HEK293 (cell line): ENCODE measurements at regions of chr6 and their contacts with region 1.

Region 1: GRCh38 chr6:46419576-46420002 is 71.7 kb downstream of the RCAN2 start:
- H3K4me3 ChIP-seq: no peak overlapping the region
- H3K27ac ChIP-seq: no peak overlapping the region
- H3K4me1 ChIP-seq: peaks cover 3% of the 10 kb centered on the region; the same call in 1 of the 2 replicates
- CTCF ChIP-seq: no peak

Region 2: DNA sequence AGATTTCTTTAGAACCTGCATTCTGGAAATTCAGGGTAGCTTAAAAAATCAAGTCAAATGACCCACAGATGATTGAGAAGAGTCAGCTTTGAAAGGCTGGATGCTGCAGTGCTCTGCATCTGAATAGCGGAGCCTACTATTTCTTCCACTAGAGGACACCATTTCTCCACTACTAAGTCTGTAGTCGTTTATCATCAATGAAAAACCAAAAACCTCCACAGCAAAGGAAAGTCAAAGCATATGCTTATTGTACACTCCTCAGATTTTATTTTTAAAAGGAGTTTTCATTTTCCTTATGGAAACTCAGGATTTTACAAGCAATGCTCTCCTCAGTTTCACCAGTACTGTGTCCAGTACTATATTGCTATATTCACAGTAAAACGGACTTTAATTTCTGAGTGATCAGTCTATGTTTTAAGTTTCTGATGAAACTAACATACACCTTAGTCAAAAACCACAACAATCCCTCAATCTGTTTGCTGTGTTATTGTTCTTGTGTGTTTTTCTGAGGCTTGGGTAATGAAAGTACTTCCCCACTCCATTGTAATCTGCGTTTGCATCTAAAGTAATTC is 198.3 kb before region 1 on chr6:
- CTCF ChIA-PET with region 1: interaction called, 13 read pairs
- POLR2A ChIA-PET with region 1: no interaction called
- H3K4me3 ChIP-seq: no peak overlapping the region
- H3K27ac ChIP-seq: no peak overlapping the region
- H3K4me1 ChIP-seq: no peaks in the 10 kb centered on the region
- CTCF ChIP-seq: peak; percentile 65; the same call in 1 of the 2 replicates

Region 3: DNA sequence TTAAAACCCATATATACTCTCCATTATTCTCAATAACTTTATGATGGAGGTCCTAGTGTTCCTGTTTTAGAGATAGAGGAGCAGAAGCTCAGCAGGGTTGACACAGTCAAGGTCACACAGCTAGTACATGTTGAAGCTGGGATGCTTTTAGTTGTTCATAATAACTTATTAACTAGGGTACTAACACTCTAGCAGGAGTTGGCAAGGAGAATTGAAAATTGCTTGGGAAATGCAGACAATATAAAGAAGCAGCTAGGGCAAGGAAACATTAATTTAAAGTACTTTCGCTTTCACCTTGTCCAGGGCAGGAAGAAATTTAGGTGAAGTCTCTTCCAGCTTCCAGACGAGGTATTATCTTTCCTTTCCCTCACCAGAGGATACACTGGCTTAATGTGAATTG is 62.0 kb before region 1 on chr6:
- CTCF ChIA-PET with region 1: no interaction called
- POLR2A ChIA-PET with region 1: no interaction called
- H3K4me3 ChIP-seq: no peak overlapping the region
- H3K27ac ChIP-seq: no peak overlapping the region
- H3K4me1 ChIP-seq: no peaks in the 10 kb centered on the region
- CTCF ChIP-seq: no peak

Region 4: DNA sequence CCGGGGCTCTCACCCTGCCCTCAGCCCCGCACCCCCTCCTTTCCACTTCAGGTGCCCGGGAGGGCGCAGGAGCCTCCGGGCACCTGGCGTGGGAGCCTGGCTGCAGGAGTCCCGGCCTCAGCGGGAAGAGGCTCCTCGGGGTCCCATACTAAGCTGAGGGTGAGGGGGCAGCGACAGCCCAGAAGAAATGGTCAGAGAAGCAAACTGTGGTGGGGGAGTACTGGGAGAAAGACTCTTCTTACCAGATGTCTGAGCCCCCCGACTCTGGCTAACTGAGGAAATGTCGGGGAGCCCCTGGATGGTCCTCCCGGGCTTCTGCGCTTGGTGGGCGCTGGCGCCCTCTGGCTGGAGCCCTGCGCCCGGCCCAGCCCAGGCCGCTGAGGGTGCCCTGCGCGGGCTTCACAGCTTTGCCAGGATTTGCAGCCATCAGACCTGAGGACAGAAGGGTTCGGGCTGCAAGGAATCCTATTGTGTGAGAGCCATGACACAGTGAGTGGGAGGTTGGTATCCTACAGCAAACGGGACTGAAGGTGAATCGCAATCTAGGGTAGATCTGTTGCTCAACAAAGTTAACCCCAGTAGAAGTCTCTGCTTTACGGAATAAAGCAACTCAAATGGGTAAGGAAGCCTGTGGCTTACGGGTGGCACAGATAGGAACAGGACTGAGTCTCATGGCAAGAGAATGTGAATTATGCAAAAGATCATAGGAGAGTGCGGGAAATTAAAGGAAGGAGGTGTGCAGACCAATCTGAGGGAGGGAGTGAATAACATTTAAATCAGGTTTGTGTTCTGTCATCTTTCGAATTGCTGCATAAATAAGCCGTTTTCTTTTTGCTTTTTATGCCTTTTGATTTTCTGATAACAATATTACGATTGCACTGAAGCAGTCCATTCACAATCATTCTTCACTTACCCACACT is 72.3 kb after region 1 on chr6:
- CTCF ChIA-PET with region 1: interaction called, 11 read pairs
- POLR2A ChIA-PET with region 1: no interaction called
- H3K4me3 ChIP-seq: peak overlapping the region; percentile 68
- H3K27ac ChIP-seq: no peak overlapping the region; the same call in 1 of the 2 replicates
- H3K4me1 ChIP-seq: 0 out of 2 replicates have a peak, but pooled peaks cover 3% of the 10 kb centered on the region
- CTCF ChIP-seq: peak; percentile 86

Region 5: DNA sequence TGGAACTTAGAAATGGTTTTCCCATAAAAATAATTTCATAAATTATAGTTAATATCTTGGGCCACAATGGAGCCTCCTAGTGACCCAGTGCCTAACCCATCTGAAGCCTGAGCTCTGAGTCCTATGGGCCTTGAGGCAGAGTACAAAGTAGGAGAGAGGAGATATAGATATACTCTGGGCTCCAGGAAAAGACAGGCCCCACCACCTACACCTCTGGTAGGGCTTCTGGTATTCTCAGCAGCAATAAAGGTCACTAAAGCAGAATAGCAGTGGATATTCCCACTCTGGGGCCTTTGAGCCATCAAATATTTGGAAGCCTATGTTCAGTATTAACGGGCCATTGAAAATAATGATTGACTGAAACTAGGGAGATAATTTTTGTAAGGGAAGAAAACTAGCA is 208.9 kb after region 1 on chr6:
- CTCF ChIA-PET with region 1: interaction called, 15 read pairs
- POLR2A ChIA-PET with region 1: no interaction called
- H3K4me3 ChIP-seq: no peak overlapping the region
- H3K27ac ChIP-seq: no peak overlapping the region
- H3K4me1 ChIP-seq: no peaks in the 10 kb centered on the region
- CTCF ChIP-seq: no peak